MCF 10A (cell line): ENCODE measurements at regions of chr21 and their contacts with region 1.

Region 1: GRCh38 chr21:38712071-38712470 is 93.7 kb upstream of the ETS2 start:
- DNase-seq: peak; percentile 61
- H3K4me3 Mint-ChIP-seq: no peak overlapping the region
- H3K27ac Mint-ChIP-seq: no peak overlapping the region
- H3K4me1 Mint-ChIP-seq: no peaks in the 10 kb centered on the region
- H3K27me3 Mint-ChIP-seq: no peaks in the 10 kb centered on the region
- CTCF ChIP-seq: peak; percentile 42

Region 2: GRCh38 chr21:38505654-38506515 is 206.2 kb before region 1 on chr21:
- CTCF ChIA-PET with region 1: interaction called, 19 read pairs
- POLR2A ChIA-PET with region 1: interaction called, 3 read pairs
- intact Hi-C with region 1: loop called (anchors 1 kb)
- DNase-seq: peak; percentile 81
- H3K4me3 Mint-ChIP-seq: no peak overlapping the region
- H3K27ac Mint-ChIP-seq: no peak overlapping the region
- H3K4me1 Mint-ChIP-seq: peaks cover 5% of the 10 kb centered on the region
- H3K27me3 Mint-ChIP-seq: no peaks in the 10 kb centered on the region
- CTCF ChIP-seq: peak; percentile 54

Region 3: DNA sequence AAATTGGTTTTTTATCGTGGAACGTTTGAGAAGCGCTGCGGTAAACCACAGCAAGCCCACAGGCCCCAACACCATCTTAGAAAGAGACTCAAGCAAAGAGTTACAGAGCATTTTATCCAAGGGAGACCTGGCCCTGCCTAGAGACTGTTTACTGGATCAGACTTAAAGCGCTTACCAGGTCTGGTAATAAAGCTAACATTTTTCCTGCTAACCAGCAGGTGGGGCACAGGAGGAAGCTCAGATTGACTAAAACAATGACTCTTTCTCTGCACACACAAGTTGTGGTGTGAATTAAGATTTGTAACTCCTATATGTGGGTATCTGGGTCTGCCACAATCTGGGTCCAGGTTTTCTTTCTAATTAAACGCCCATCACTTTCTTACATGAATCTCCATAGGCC is 42.9 kb before region 1 on chr21:
- CTCF ChIA-PET with region 1: interaction called, 40 read pairs
- POLR2A ChIA-PET with region 1: interaction called, 6 read pairs
- intact Hi-C with region 1: loop called (anchors 2 kb)
- DNase-seq: peak; percentile 48
- H3K4me3 Mint-ChIP-seq: no peak overlapping the region
- H3K27ac Mint-ChIP-seq: no peak overlapping the region
- H3K4me1 Mint-ChIP-seq: no peaks in the 10 kb centered on the region
- H3K27me3 Mint-ChIP-seq: peaks cover 35% of the 10 kb centered on the region
- CTCF ChIP-seq: peak; percentile 48

Region 4: DNA sequence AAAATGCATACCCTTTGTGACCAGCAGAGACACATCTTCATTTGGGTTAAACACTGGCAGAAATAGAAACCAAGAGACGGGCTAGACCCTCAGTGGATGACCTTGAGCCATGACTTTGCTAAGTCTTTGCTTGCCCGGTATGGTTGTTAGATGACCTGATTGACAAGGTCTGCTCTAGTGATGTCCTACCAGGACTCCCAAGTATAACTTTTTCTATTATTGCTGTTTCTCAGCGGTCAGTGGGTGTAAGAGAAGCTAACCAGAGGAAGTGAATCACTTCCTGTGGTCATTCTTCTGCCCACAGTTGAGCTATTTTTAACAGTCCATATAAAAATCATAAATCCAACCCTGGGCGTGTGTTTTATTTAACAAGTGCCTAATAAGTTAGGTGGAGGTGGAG is 32.5 kb before region 1 on chr21:
- CTCF ChIA-PET with region 1: interaction called, 11 read pairs
- POLR2A ChIA-PET with region 1: interaction called, 4 read pairs
- intact Hi-C with region 1: no loop called
- DNase-seq: peak; percentile 39
- H3K4me3 Mint-ChIP-seq: no peak overlapping the region
- H3K27ac Mint-ChIP-seq: no peak overlapping the region
- H3K4me1 Mint-ChIP-seq: peaks cover 11% of the 10 kb centered on the region
- H3K27me3 Mint-ChIP-seq: peaks cover 13% of the 10 kb centered on the region
- CTCF ChIP-seq: no peak

Region 5: DNA sequence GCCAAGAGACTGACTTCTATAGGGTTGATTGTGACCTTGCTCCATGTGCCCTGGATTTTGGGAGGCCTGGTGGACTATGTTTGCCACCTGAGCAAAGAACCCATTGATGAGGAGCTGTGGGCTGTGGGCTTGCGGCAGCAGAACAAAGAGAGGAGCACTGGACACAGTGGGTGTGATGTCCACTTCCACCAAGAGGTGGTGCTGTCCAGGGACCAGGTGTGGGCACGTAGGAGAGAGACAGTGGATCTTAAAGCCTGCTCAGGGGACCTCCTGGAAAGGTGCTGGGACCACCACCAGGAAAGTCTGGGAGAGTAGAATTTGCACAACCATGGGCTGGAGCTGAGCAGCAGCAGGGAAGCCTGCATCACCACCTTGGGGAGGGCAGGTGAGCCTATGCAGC is 13.0 kb before region 1 on chr21:
- CTCF ChIA-PET with region 1: interaction called, 10 read pairs
- POLR2A ChIA-PET with region 1: no interaction called
- intact Hi-C with region 1: no loop called
- DNase-seq: no peak
- H3K4me3 Mint-ChIP-seq: no peak overlapping the region
- H3K27ac Mint-ChIP-seq: no peak overlapping the region
- H3K4me1 Mint-ChIP-seq: no peaks in the 10 kb centered on the region
- H3K27me3 Mint-ChIP-seq: peaks cover 32% of the 10 kb centered on the region
- CTCF ChIP-seq: no peak